BJ (cell line): ENCODE measurements at regions of chr11 and their contacts with region 1.

Region 1: GRCh38 chr11:19566583-19567379 is 145.9 kb upstream of the NAV2 start:
- DNase-seq: no peak
- H3K4me3 ChIP-seq: no peak overlapping the region
- H3K27me3 ChIP-seq: no peaks in the 10 kb centered on the region
- CTCF ChIP-seq: no peak

Region 2: GRCh38 chr11:19511413-19512183 is 55.2 kb before region 1 on chr11:
- CTCF ChIA-PET with region 1: no interaction called
- POLR2A ChIA-PET with region 1: no interaction called
- DNase-seq: no peak
- H3K4me3 ChIP-seq: no peak overlapping the region
- H3K27me3 ChIP-seq: peaks cover 13% of the 10 kb centered on the region
- CTCF ChIP-seq: no peak

Region 3: DNA sequence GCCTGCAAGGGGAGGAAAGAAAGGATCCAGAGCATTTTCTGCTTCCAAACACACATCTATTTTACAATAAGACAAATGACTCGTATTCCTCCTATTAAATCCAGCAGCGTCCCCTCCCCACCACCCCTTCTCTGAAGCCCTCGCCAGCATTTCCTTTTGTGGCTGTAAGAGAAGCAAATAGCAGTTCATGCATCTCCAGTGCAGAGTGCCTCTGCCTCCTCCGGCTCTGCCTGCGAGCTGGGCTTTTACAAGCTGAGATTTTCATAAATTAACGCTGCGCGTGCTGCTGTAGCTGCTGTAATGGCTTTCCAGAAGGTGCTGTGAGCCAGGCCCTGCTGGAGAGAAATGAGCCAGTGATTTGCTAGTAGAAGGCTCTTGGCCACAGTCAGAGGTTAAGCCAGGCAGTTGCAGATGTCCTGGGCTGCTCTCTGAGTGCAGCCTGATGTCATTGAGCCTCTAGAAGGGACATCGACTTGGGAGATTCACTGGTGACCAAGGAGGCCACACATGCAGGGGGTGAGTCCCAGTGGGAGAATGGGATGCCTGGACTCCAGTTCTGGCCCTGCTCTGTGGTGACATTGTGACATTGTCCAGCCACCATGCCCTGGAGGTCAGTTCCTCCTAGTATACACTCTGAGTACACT is 11.3 kb after region 1 on chr11:
- CTCF ChIA-PET with region 1: interaction called, 46 read pairs
- POLR2A ChIA-PET with region 1: no interaction called
- DNase-seq: peak; percentile 85
- H3K4me3 ChIP-seq: no peak overlapping the region
- H3K27me3 ChIP-seq: no peaks in the 10 kb centered on the region
- CTCF ChIP-seq: 0 out of 2 replicates have a peak, but pooled peaks have one; percentile 5

Region 4: DNA sequence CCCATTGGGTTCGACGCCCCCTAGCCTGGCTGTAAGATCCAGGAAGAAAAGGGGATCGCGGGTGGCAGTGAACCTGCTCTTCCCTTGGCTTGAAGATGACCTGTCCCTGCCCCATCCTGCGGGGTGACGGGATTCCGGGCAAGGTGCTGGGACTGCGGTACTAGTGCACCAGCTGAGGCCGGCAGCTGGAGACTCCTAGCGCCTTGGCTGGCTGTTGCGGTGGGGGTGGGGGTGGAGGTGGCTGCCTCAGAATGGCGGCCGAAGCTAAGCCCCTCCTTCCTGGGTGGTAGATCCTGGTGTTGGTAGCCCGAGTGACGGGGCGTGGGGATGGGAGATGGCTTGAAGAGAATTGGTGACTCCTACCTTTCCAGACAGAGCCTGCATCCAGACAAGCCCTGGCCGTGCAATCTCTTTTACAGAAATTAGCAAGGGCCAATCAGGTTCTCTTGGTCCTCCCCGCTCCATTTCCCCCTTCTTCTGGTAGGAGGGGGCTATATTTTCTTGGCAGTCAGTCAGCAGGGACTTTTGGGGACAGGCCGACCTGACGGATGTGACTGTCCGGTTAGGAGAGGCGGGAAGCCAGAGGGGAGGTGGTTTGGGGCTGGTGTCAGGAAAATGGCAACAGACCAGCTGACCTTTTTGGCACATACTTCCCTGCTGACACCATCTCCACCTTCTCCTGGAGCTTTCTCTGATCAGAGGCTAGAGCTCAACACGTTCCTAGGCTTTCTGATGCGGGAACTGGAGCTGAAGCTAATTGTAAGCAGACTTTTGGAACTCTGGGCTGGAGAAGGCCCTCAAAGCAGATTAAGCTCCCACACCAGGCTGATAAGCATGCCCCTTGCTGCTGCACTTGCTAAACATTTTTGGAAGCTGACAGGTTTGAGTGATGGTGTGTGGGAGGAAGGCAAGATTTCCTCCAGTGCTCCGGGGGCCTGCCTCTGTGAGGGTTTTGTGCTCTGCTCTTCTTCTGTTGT is 147.9 kb after region 1 on chr11:
- CTCF ChIA-PET with region 1: interaction called, 12 read pairs
- POLR2A ChIA-PET with region 1: no interaction called
- DNase-seq: peak; percentile 19
- H3K4me3 ChIP-seq: peak overlapping the region; percentile 78
- H3K27me3 ChIP-seq: no peaks in the 10 kb centered on the region
- CTCF ChIP-seq: no peak

Region 5: DNA sequence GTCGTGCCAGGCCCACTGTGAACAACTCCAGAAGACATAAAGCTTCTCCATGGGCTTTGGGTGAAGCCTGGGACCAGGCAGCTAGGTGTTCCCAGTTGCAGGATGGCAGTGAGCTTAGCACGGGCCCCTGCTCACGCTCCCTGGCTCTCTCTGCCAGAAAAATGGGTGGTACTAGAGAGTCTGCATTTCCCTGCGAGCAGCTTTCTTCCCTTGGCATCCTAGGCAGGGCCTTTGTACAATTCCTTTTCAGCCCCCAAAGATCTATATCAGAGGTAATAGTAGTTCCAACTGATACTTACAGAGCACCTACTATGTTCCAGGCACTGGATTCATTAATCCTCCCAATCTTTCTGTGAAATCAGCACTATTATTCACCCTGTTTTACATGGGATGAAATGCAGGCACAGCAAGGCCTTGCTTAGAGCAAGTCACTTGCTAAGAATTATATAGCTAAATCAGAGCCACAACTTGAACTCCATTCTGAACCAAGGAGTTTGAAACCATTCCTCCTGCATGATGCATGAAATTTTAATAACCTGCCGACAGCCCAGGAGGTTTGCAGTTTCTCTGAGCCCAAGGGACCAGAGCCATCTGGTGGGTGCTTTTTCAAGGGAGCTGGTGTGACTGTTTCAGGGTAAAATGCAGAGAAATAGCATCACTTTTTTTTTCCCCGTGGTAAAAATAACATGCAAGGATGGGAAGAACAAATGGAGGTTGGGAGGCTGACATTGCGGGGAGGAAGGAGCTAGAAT is 168.6 kb after region 1 on chr11:
- CTCF ChIA-PET with region 1: interaction called, 77 read pairs
- POLR2A ChIA-PET with region 1: no interaction called
- DNase-seq: peak; percentile 36
- H3K4me3 ChIP-seq: no peak overlapping the region
- H3K27me3 ChIP-seq: no peaks in the 10 kb centered on the region
- CTCF ChIP-seq: peak; percentile 66

Region 6: GRCh38 chr11:19742588-19743292 is 176.0 kb after region 1 on chr11:
- CTCF ChIA-PET with region 1: interaction called, 138 read pairs
- POLR2A ChIA-PET with region 1: no interaction called
- DNase-seq: no peak
- H3K4me3 ChIP-seq: no peak overlapping the region
- H3K27me3 ChIP-seq: no peaks in the 10 kb centered on the region
- CTCF ChIP-seq: peak; percentile 84

Region 7: DNA sequence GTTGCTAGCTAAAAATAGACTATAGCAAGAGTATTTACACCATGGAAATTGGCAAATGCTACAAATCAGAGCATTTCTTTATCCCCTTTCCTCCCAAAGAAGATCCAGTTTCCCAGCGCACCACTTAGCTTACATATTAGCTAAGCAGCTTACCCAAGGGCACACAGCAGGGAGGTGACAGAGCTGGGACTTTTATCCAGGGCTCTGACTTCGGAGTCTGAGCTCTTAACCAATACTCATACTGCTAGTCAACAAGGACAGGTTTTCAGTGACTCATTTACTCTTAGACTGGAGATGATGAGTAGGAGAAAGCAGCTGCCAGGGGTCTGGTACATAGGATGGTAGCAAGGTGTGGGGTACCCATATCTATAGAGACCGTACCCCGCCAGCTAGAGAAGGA is 184.3 kb after region 1 on chr11:
- CTCF ChIA-PET with region 1: interaction called, 41 read pairs
- POLR2A ChIA-PET with region 1: no interaction called
- DNase-seq: no peak
- H3K4me3 ChIP-seq: no peak overlapping the region
- H3K27me3 ChIP-seq: no peaks in the 10 kb centered on the region
- CTCF ChIP-seq: no peak

Region 8: GRCh38 chr11:19903620-19904069 is 336.9 kb after region 1 on chr11:
- CTCF ChIA-PET with region 1: interaction called, 119 read pairs
- POLR2A ChIA-PET with region 1: interaction called, 3 read pairs
- DNase-seq: no peak
- H3K4me3 ChIP-seq: no peak overlapping the region
- H3K27me3 ChIP-seq: no peaks in the 10 kb centered on the region
- CTCF ChIP-seq: peak; percentile 88